GM12878 (cell line): ENCODE measurements at regions of chr1 and their contacts with region 1.

Region 1: DNA sequence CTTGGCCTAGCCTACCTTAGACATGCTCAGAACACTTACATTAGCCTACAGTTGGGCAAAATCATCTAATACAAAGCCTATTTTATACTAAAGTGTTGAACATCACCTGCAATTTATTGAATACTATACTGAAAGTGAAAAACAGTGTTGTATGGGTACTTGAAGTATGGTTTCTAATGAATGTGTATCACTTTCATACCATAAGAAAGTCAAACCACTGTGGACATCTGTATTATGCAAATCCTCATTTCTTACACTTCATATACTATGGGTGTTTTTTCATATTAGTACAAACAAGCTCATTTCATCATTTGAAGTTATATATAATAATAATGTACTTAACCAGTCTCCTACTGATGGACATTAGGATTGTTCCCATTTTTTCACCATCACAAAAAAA is 41.2 kb downstream of the TDRD5 start:
- DNase-seq: no peak
- ATAC-seq: peak; percentile 62
- H3K4me3 ChIP-seq: no peak overlapping the region
- H3K27ac ChIP-seq: no peak overlapping the region
- H3K4me1 ChIP-seq: no peaks in the 10 kb centered on the region
- H3K27me3 ChIP-seq: no peaks in the 10 kb centered on the region
- CTCF ChIP-seq: no peak
- EP300 ChIP-seq: no peak
- POLR2A ChIP-seq: no peak
- RAD21 ChIP-seq: no peak

Region 2: GRCh38 chr1:179599623-179600249 is 33.1 kb before region 1 on chr1:
- CTCF ChIA-PET with region 1: no interaction called
- POLR2A ChIA-PET with region 1: no interaction called
- RAD21 ChIA-PET with region 1: no interaction called
- SMC1A ChIA-PET with region 1: no interaction called
- in situ Hi-C with region 1: no loop called
- intact Hi-C with region 1: loop called (anchors 1 kb)
- DNase-seq: no peak
- ATAC-seq: peak; percentile 76
- H3K4me3 ChIP-seq: no peak overlapping the region
- H3K27ac ChIP-seq: no peak overlapping the region
- H3K4me1 ChIP-seq: no peaks in the 10 kb centered on the region
- H3K27me3 ChIP-seq: no peaks in the 10 kb centered on the region
- CTCF ChIP-seq: peak; percentile 17 to 43 (median 34); a peak in 5 of 6 replicates
- EP300 ChIP-seq: no peak
- POLR2A ChIP-seq: no peak
- RAD21 ChIP-seq: no peak

Region 3: DNA sequence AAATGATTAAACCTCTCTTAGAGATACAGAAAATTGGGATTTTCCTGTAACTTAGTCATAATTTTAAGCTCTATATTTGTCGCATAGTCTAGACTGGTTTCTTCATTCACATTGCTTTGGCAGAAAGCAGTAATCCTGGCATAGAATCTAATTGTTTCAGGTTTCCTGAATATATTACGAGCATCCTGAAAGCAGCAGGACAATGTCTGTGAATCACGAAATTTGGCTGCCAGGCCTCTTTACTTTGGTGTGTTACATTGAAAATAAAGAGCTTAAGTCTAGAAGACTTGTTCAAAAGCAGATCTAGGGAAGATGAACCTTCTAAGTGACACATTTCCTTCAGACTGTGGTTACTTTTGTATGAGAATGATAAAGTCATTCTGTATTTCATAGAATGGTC is 30.9 kb after region 1 on chr1:
- CTCF ChIA-PET with region 1: no interaction called
- POLR2A ChIA-PET with region 1: no interaction called
- RAD21 ChIA-PET with region 1: no interaction called
- SMC1A ChIA-PET with region 1: no interaction called
- in situ Hi-C with region 1: no loop called
- intact Hi-C with region 1: loop called (anchors 2 kb)
- DNase-seq: no peak
- ATAC-seq: no peak
- H3K4me3 ChIP-seq: no peak overlapping the region
- H3K27ac ChIP-seq: no peak overlapping the region
- H3K4me1 ChIP-seq: no peaks in the 10 kb centered on the region
- H3K27me3 ChIP-seq: no peaks in the 10 kb centered on the region
- CTCF ChIP-seq: no peak
- EP300 ChIP-seq: no peak
- POLR2A ChIP-seq: no peak
- RAD21 ChIP-seq: no peak